ENCODE measurements at regions of chr6 and their contacts with region 1.

Region 1: DNA sequence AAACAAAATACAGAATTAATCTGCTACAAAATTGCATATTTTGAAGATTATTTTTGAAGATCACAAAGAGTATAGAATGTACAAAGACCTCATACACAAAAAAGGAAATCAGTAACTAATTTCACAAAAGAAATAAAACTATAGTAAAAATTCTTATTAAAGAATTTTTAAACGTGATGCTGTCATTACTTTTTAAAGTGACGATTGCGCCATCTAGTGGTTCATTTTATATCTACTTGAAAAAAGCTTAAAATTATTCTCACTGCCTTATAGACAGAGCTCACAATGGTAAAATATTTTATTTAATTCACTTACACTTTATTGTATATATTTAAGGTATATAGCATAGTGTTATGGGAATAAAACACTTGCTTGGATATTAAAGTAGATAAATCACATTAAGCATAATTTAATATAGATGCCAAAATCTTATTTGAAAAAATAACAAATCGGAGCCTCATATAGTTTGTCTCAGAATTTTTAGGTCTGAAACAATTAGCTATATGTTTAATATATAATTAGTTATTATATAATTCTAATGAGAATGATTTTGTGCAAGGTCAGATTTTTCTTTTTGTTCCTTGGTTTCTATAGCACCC is 128.8 kb downstream of the PHF3 start:
- DNase-seq: no peak
- H3K4me3 ChIP-seq: no peak overlapping the region
- H3K27ac ChIP-seq: no peak overlapping the region
- H3K4me1 ChIP-seq: no peaks in the 10 kb centered on the region
- H3K27me3 ChIP-seq: no peaks in the 10 kb centered on the region
- CTCF ChIP-seq: peak; percentile 25 to 51 (median 45)
- POLR2A ChIP-seq: no peak

Region 2: GRCh38 chr6:63589927-63590411 is 174.4 kb before region 1 on chr6:
- intact Hi-C with region 1: loop called (anchors 5 kb)
- DNase-seq: no peak
- H3K4me3 ChIP-seq: no peak overlapping the region
- H3K27ac ChIP-seq: no peak overlapping the region
- H3K4me1 ChIP-seq: no peaks in the 10 kb centered on the region
- H3K27me3 ChIP-seq: no peaks in the 10 kb centered on the region
- CTCF ChIP-seq: no peak
- POLR2A ChIP-seq: no peak

Region 3: DNA sequence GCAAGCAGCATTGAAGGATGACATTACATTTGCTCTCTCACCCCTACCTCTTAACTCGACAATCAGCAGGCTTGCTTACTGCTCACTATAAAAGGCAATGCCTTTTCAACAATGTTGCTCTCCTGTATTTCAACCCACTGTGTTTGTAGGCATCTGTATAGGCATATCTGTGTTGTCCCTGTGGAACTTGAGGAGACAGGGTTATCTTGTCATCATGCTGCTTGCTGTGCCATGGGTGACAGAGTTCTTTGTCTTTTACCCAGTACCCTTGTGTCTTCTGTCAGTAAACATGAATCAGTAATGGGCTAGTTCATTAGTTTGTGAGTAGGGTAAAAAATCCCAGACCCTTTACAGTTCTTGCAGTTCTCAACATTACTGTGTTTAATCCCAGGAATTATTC is 103.7 kb before region 1 on chr6:
- intact Hi-C with region 1: no loop called
- DNase-seq: no peak
- H3K4me3 ChIP-seq: no peak overlapping the region
- H3K27ac ChIP-seq: no peak overlapping the region
- H3K4me1 ChIP-seq: no peaks in the 10 kb centered on the region
- H3K27me3 ChIP-seq: no peaks in the 10 kb centered on the region
- CTCF ChIP-seq: no peak
- POLR2A ChIP-seq: no peak